PC-3 (cell line): ENCODE measurements at regions of chr12 and their contacts with region 1.

Region 1: DNA sequence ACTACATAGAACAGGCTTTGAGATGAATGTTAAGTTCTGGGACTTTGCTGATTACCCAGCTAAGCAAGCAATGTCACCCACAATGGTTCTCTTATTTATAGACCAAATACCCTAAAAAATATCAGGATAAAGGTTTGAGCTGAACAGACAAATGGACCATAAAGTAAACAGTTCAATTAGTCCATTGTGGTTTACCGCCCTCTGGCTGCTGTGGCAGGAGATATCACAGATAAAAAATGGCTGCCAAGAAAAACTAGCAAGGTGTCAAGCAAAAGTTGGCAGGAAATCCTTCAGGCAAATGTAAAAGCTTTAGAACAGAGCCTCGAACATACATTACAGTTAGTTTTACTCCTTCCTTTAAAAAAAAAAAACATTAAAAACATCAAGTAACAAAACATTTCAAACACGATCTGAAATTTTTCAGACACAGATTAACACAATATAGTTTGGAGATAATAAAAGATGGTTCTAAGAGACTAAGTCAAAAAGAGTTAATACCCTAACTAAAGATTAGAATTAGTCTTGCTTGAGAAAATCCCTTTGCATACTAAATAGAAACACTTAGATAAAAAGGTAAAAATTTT is 41.3 kb downstream of the MED13L start:
- DNase-seq: peak; percentile 69
- ATAC-seq: peak; percentile 43
- H3K4me3 ChIP-seq: no peak overlapping the region
- H3K27ac ChIP-seq: no peak overlapping the region
- H3K4me1 ChIP-seq: peaks cover 16% of the 10 kb centered on the region
- H3K27me3 ChIP-seq: no peaks in the 10 kb centered on the region
- CTCF ChIP-seq: peak; percentile 91

Region 2: GRCh38 chr12:115983226-115983798 is 252.9 kb before region 1 on chr12:
- CTCF ChIA-PET with region 1: interaction called, 13 read pairs
- POLR2A ChIA-PET with region 1: no interaction called
- intact Hi-C with region 1: no loop called
- DNase-seq: peak; percentile 53
- ATAC-seq: peak; percentile 57
- H3K4me3 ChIP-seq: no peak overlapping the region
- H3K27ac ChIP-seq: no peak overlapping the region
- H3K4me1 ChIP-seq: no peaks in the 10 kb centered on the region
- H3K27me3 ChIP-seq: no peaks in the 10 kb centered on the region
- CTCF ChIP-seq: peak; percentile 81

Region 3: DNA sequence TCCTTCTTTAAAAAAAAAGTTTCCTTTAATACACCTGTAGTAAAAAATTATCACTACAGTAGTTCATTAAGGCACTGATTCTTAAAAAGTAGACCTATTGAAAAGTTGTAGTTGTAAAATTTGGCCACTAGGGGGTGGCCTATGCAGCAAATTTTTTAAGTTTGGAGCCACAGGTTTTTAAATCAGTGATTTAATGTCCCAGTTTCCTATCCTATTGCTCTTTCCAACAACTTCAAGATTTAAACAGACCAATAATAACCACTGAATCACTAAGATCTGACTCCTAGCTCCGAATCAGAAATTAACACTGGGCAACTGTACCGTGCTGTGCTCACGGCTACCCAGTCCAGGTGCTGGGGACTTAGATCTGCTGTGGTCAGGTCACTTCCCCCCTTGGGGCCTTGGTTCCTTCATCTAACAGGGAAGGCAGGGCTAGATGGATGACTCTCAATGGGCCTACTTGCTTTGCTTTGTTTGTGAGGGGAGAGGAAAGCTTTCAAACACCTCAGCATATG is 238.1 kb before region 1 on chr12:
- CTCF ChIA-PET with region 1: no interaction called
- POLR2A ChIA-PET with region 1: no interaction called
- intact Hi-C with region 1: loop called (anchors 1 kb)
- DNase-seq: peak; percentile 81
- ATAC-seq: peak; percentile 66
- H3K4me3 ChIP-seq: no peak overlapping the region
- H3K27ac ChIP-seq: no peak overlapping the region
- H3K4me1 ChIP-seq: peaks cover 17% of the 10 kb centered on the region
- H3K27me3 ChIP-seq: no peaks in the 10 kb centered on the region
- CTCF ChIP-seq: peak; percentile 97

Region 4: GRCh38 chr12:116015525-116015924 is 220.7 kb before region 1 on chr12:
- CTCF ChIA-PET with region 1: interaction called, 5 read pairs
- POLR2A ChIA-PET with region 1: no interaction called
- intact Hi-C with region 1: loop called (anchors 1 kb)
- DNase-seq: peak; percentile 74
- ATAC-seq: peak; percentile 89
- H3K4me3 ChIP-seq: no peak overlapping the region
- H3K27ac ChIP-seq: no peak overlapping the region
- H3K4me1 ChIP-seq: peaks cover 8% of the 10 kb centered on the region
- H3K27me3 ChIP-seq: no peaks in the 10 kb centered on the region
- CTCF ChIP-seq: peak; percentile 87

Region 5: DNA sequence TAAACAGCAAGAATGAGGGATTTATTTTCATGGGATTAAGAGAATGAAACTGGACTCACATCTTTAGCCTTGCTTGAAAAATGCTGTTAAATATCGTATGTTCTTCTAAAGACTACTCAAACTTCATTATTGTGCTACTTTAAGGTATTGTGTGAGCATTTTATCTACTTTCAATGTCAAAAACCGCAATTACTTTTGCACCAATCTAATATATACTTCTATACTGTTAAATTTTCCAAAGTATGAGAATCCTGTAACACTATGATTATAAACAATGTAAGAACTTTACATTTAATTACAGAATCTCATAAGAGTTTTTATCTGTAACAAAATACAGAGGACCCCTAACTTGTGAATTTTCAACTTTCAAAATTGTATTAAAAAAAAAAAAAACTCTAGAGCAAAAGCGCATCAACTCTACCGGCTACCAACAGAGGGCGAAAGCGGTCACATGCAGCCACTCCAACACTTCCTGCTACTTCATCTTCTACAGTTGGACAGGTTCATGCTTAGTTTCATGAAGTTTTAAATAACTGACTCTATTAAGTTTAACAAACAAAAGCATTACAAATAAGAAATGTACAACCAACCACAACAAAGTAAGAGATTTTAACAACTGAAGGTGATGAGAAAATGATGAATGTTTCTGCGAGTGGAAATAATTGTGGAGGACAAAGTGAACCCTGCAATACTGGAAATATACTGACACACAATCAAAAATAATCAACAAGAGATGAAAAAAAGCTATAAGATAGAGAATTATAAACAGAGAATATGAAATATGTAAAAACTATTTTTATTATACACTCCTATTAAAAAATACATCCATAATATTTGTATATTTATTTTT is 169.6 kb before region 1 on chr12:
- CTCF ChIA-PET with region 1: no interaction called
- POLR2A ChIA-PET with region 1: no interaction called
- intact Hi-C with region 1: loop called (anchors 5 kb)
- DNase-seq: peak; percentile 66
- ATAC-seq: peak; percentile 61
- H3K4me3 ChIP-seq: no peak overlapping the region
- H3K27ac ChIP-seq: no peak overlapping the region
- H3K4me1 ChIP-seq: peaks cover 6% of the 10 kb centered on the region
- H3K27me3 ChIP-seq: no peaks in the 10 kb centered on the region
- CTCF ChIP-seq: peak; percentile 98

Region 6: GRCh38 chr12:116202940-116203339 is 33.3 kb before region 1 on chr12:
- CTCF ChIA-PET with region 1: no interaction called
- POLR2A ChIA-PET with region 1: interaction called, 11 read pairs
- intact Hi-C with region 1: no loop called
- DNase-seq: no peak
- ATAC-seq: no peak
- H3K4me3 ChIP-seq: no peak overlapping the region
- H3K27ac ChIP-seq: no peak overlapping the region
- H3K4me1 ChIP-seq: peaks cover 8% of the 10 kb centered on the region
- H3K27me3 ChIP-seq: no peaks in the 10 kb centered on the region
- CTCF ChIP-seq: no peak